ENCODE measurements at regions of chr7 and their contacts with region 1.

Region 1: DNA sequence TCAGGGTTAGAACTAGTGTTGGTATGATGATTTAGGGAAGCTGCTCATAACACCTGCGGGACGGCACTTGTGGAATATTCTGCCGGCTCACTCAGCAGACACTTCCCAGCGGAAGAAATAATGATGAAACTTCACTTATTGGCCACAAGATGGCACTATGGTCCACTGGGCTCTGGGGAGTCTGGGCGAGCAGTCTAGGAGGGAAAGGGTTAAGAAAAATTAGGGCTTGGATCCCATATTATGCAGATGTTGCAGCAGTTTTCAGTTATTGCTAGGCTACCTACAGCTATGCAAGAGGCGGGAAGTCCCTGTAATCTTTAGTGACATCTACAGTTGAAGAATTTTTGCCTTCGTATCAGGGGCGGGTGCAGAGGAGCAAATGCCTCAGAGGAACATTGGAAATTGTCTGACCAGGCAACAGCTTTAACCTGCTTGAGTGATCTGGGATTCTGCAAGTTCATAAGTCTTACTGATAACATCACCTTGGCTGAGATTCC is 238.7 kb upstream of the PRSS58 start:
- DNase-seq: no peak
- H3K4me3 ChIP-seq: no peak overlapping the region
- CTCF ChIP-seq: peak; percentile 73

Region 2: DNA sequence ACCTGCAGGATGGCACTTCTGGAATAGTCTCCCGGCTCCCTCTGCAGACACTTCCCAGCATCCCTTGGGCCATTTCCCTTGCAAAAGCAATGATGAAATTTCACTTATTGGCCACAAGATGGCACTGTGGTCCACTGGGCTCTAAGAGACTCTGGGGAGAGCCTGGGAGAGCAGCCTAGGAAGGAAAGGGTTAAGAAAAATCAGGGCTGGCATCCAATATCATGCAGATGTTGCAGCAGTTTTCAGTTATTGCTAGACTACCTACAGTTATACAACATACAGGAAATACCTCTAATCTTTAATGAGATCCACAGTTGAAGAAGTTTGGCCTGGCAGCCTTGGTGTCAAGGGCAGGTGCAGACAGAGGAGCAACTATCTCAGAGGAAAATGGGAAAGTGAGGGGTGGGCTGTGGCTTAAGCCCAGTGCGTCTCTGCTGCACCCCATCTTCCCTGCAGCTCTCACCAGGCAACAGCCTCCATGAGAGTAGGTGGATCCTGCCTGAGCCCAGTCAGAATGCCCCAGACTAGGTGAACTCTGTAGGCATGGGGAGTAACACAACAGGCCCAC is 138.6 kb before region 1 on chr7:
- CTCF ChIA-PET with region 1: interaction called, 14 read pairs
- POLR2A ChIA-PET with region 1: no interaction called
- DNase-seq: peak; percentile 36
- H3K4me3 ChIP-seq: no peak overlapping the region
- CTCF ChIP-seq: peak; percentile 80

Region 3: GRCh38 chr7:142508258-142508689 is 11.7 kb after region 1 on chr7:
- CTCF ChIA-PET with region 1: interaction called, 2,267 read pairs
- POLR2A ChIA-PET with region 1: no interaction called
- DNase-seq: no peak
- H3K4me3 ChIP-seq: no peak overlapping the region
- CTCF ChIP-seq: no peak

Region 4: DNA sequence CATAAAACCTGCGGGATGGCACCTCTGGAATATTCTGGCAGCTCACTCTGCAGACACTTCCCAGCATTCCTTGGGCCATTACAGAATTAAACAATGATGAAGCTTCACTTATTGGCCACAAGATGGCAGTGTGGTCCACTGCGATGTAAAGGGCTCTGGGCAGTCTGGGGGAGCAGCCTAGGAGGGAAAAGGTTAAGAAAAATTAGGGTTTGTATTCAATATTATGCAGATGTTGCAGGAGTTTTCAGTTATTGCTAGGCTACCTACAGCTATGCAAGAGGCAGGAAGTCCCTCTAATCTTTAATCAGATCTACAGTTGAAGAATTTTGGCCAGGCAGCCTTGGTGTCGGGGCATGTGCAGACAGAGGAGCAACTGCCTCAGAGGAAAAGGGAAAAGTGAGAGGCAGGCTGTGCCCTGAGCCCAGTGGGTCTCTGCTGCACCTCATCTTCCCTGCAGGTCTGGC is 19.5 kb after region 1 on chr7:
- CTCF ChIA-PET with region 1: interaction called, 2,267 read pairs
- POLR2A ChIA-PET with region 1: no interaction called
- DNase-seq: peak; percentile 29
- H3K4me3 ChIP-seq: no peak overlapping the region
- CTCF ChIP-seq: peak; percentile 68

Region 5: DNA sequence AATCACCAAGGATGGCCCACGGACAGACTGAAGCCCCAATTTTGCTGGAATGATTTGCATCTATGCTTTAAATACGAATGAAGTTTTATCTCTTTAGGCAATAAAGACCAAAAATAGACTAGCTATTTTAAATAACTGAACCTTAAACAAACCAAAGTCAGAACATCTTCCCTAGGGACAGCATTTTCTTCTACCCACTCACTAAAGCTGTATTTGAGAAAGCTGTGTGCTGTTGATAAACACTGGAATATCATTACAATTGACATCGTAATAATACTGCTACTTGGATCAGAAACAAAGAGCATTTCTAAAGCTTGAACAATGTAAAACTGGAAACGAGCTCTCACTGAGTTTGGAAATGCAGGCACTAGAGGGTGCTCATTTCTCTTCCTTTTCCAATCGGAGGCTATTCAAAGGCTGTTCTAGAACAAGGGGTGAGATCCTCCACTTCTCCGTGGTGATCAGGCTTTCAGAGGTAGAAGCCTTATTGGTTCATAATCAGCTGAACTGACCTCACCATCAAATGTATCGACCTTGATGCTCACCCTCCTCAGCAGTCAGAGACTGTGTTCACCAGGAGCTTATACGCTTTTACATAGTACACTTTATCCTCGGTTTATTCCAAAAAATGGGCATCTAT is 27.3 kb after region 1 on chr7:
- CTCF ChIA-PET with region 1: interaction called, 2,267 read pairs
- POLR2A ChIA-PET with region 1: no interaction called
- DNase-seq: no peak
- H3K4me3 ChIP-seq: no peak overlapping the region
- CTCF ChIP-seq: no peak